ENCODE measurements at regions of chr9 and their contacts with region 1.

Region 1: DNA sequence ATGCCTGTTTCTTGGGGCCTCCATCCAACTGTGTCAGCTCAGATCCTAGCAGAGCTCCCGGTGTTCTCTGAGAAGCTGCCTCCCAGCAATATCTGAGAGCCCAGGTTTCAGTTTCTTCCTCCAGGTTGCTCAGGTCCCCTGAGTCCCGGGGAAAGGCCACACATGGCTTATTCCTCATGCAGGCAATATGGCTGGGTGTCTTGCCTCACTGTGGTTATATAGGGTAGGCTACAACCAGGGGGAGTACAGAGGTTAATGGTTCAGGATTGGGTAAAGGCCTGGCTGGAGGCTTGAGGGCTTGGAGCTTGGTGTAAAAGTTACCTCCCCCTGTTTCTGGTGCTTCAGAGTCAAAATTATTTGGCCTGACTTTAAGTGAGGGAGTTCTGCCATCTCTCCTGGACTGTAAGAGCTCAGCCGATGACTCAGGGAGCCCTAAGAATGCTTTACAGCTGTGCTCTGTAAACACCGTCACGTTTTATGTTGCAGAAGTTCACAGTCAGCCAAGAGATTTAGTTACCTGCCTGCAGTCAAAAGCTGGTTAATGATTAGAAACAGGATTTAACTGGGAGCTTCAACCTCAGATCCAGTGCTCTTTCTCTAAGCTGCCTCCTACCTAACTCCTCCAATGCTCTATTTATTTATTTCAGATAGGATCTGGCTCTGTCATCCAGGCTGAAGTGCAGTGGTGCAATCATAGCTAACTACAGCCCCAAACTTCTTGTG is 24.3 kb upstream of the UBAP2 start:
- DNase-seq: peak in 4 of 7 donors; percentile 28 to 57 (median 33)
- H3K4me3 ChIP-seq: no peak overlapping the region
- H3K27ac ChIP-seq: peak overlapping the region in 3 of 5 donors; percentile 31 to 52 (median 38)
- H3K4me1 ChIP-seq: peaks cover 11 to 12% of the 10 kb centered on the region in 2 donors
- H3K27me3 ChIP-seq: no peaks in the 10 kb centered on the region
- CTCF ChIP-seq: no peak
- POLR2A ChIP-seq: no peak

Region 2: GRCh38 chr9:34025062-34025461 is 48.0 kb before region 1 on chr9:
- intact Hi-C with region 1: loop called in 1 of 2 experiments (anchors 10 kb)
- DNase-seq: no peak
- H3K4me3 ChIP-seq: no peak overlapping the region
- H3K27ac ChIP-seq: no peak overlapping the region
- H3K4me1 ChIP-seq: peaks cover 5 to 17% of the 10 kb centered on the region in 2 donors
- H3K27me3 ChIP-seq: no peaks in the 10 kb centered on the region
- CTCF ChIP-seq: no peak
- POLR2A ChIP-seq: no peak

Measured in adrenal gland (tissue), 19 donors.